Dorsolateral prefrontal cortex (tissue), 120 donors: ENCODE measurements at regions of chr10 and their contacts with region 1.

Region 1: GRCh38 chr10:70549962-70550458 is 52.5 kb downstream of the PRF1 start:
- DNase-seq: peak; percentile 57 to 79 (median 64)
- H3K4me3 ChIP-seq: no peak overlapping the region
- H3K27ac ChIP-seq: peak overlapping the region in 1 of 59 donors; percentile 58
- H3K27me3 ChIP-seq: no peaks in the 10 kb centered on the region
- CTCF ChIP-seq: peak; percentile 82 to 97 (median 93)

Region 2: GRCh38 chr10:70508912-70509756 is 40.9 kb before region 1 on chr10:
- intact Hi-C with region 1: no loop called
- DNase-seq: peak in 5 of 10 donors; percentile 43 to 59 (median 49)
- H3K4me3 ChIP-seq: peak overlapping the region in 3 of 59 donors; percentile 3 to 10 (median 9)
- H3K27ac ChIP-seq: peak overlapping the region in 52 of 59 donors; percentile 9 to 86 (median 66)
- H3K27me3 ChIP-seq: no peaks in the 10 kb centered on the region
- CTCF ChIP-seq: no peak

Region 3: DNA sequence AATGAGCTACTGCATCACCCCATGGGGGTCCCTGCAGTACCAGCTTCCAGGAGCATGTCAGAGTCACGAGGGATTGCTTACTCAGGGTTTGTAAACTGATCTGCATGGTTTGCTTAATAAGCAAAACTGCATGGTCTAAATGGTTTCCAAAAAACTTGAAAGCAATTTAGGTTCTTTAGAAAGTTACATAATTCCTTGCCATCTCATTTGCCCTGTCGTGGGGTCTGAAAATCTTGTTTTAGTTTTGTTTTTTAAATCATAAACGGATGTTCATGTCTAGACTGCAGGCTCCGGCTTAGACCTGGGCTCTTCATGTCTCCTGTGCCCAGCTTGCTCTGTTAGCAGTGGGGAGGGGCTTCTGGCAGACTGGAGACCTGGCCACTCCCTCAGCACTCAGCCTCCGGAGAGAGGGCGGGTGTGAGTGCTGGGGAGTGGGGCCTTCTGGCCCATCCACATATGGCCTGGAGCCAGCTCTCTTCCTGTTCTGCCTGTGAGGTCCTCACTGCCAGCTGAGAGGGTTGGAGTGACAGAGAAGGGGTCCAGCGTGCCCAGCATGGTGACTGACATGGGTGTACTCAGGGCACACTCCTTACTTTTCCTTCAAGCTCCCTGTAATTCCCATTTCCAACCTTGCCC is 35.0 kb after region 1 on chr10:
- intact Hi-C with region 1: no loop called
- DNase-seq: peak in 2 of 10 donors; percentile 14 to 34
- H3K4me3 ChIP-seq: no peak overlapping the region
- H3K27ac ChIP-seq: no peak overlapping the region
- H3K27me3 ChIP-seq: peaks cover 0 to 3% (median 0%) of the 10 kb centered on the region in 45 donors
- CTCF ChIP-seq: no peak

Region 4: GRCh38 chr10:70679498-70679897 is 129.5 kb after region 1 on chr10:
- intact Hi-C with region 1: loop called (anchors 5 kb)
- DNase-seq: peak in 1 of 10 donors; percentile 30
- H3K4me3 ChIP-seq: no peak overlapping the region
- H3K27ac ChIP-seq: no peak overlapping the region
- H3K27me3 ChIP-seq: peaks cover 0 to 8% (median 0%) of the 10 kb centered on the region in 45 donors
- CTCF ChIP-seq: no peak